Activated CD4-positive, alpha-beta memory T cell treated with anti-CD3 and anti-CD28 coated beads for 36 hours (primary cell): ENCODE measurements at regions of chr3 and their contacts with region 1.

Region 1: GRCh38 chr3:185353823-185354614 is 8.9 kb upstream of the MAP3K13 start:
- DNase-seq: peak; percentile 80
- H3K4me3 Mint-ChIP-seq: no peak overlapping the region
- H3K27ac Mint-ChIP-seq: no peak overlapping the region
- H3K4me1 Mint-ChIP-seq: no peaks in the 10 kb centered on the region
- H3K27me3 Mint-ChIP-seq: peaks cover 6% of the 10 kb centered on the region

Region 2: DNA sequence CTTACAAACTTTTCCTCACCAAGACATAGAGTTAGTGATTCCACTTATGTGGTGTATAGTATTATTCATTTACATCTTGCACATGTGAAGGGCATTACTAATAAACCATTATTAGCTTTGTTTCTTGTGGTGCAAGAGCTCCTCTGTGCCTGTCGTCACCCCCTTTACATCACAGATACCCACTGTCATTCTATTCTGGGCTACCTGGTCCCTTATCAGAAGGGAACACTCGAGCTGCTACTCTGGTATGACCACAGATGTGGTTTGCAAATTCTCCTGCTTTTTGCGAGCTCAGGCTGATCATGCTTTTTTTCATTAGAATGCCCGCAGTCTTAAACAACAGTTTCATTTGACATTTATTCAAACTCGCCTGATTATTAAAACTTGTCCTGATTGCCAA is 218.2 kb after region 1 on chr3:
- CTCF ChIA-PET with region 1: interaction called, 4 read pairs
- POLR2A ChIA-PET with region 1: no interaction called
- intact Hi-C with region 1: loop called (anchors 1 kb)
- DNase-seq: no peak
- H3K4me3 Mint-ChIP-seq: no peak overlapping the region
- H3K27ac Mint-ChIP-seq: no peak overlapping the region
- H3K4me1 Mint-ChIP-seq: peaks cover 3% of the 10 kb centered on the region
- H3K27me3 Mint-ChIP-seq: no peaks in the 10 kb centered on the region